Right ventricle myocardium superior (tissue), 1 donor: ENCODE measurements at regions of chr19 and their contacts with region 1.

Region 1: DNA sequence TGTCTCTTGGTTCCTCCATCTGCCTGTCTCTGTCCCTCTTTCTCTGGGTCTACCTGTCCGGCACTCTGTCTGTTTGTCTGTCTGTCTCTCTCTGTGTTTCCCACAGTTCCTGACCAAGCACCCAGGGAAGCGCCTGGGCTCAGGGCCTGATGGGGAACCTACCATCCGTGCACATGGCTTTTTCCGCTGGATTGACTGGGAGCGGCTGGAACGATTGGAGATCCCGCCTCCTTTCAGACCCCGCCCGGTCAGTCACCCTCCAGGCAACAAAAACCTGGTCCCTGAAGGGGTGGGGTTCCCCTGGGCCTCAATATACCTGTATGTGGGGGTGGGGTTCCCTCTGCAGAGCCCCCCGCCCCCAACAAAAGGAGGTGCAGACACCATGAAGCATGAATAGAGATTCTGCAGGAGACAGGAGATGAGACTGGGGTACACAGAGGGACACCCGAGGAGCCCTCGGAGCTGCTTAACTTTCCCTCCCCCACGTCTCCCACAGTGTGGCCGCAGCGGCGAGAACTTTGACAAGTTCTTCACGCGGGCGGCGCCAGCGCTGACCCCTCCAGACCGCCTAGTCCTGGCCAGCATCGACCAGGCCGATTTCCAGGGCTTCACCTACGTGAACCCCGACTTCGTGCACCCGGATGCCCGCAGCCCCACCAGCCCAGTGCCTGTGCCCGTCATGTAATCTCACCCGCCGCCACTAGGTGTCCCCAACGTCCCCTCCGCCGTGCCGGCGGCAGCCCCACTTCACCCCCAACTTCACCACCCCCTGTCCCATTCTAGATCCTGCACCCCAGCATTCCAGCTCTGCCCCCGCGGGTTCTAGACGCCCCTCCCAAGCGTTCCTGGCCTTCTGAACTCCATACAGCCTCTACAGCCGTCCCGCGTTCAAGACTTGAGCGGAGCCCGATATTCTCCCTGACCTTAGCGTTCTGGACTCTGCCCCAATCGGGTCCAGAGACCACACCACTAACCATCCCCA is 2.6 kb upstream of the CACNG7 start:
- DNase-seq: peak; percentile 72
- ATAC-seq: peak; percentile 65

Region 2: GRCh38 chr19:53809518-53810186 is 96.8 kb before region 1 on chr19:
- intact Hi-C with region 1: no loop called
- DNase-seq: no peak
- ATAC-seq: no peak

Region 3: DNA sequence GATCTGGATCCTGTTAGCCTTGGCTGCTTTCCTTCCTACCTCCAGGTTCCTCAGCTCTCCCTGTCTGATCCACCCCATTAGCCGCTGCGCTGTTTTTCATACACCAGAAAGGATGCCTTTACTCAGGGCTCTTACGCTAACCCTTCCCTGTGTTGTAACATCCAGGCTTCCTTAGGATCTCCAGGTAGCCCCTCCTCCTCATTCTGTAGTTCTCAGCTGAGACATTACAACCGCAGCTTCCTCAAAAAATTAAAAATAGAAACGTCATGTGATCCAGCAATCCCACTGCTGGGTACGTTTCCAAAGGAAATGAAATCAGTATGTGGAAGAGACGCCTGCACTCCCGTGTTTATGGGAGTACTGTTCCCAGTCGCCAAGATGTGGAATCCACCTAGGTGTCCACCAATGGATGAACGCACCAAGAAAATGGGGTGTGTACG is 57.2 kb before region 1 on chr19:
- intact Hi-C with region 1: loop called (anchors 10 kb)
- DNase-seq: no peak
- ATAC-seq: peak; percentile 56

Region 4: GRCh38 chr19:54023191-54023590 is 116.7 kb after region 1 on chr19:
- intact Hi-C with region 1: loop called (anchors 5 kb)
- DNase-seq: no peak
- ATAC-seq: no peak